MCF 10A (cell line): ENCODE measurements at regions of chr1 and their contacts with region 1.

Region 1: GRCh38 chr1:204806943-204807687 is 63.5 kb upstream of the NFASC start:
- DNase-seq: peak; percentile 94
- H3K4me3 Mint-ChIP-seq: peak overlapping the region; percentile 69
- H3K27ac Mint-ChIP-seq: no peak overlapping the region
- H3K4me1 Mint-ChIP-seq: no peaks in the 10 kb centered on the region
- H3K27me3 Mint-ChIP-seq: peaks cover 25% of the 10 kb centered on the region
- CTCF ChIP-seq: peak; percentile 99

Region 2: GRCh38 chr1:204530932-204531331 is 276.2 kb before region 1 on chr1:
- CTCF ChIA-PET with region 1: interaction called, 40 read pairs
- POLR2A ChIA-PET with region 1: no interaction called
- intact Hi-C with region 1: no loop called
- DNase-seq: no peak
- H3K4me3 Mint-ChIP-seq: no peak overlapping the region
- H3K27ac Mint-ChIP-seq: no peak overlapping the region
- H3K4me1 Mint-ChIP-seq: no peaks in the 10 kb centered on the region
- H3K27me3 Mint-ChIP-seq: no peaks in the 10 kb centered on the region
- CTCF ChIP-seq: no peak

Region 3: GRCh38 chr1:204640578-204640977 is 166.5 kb before region 1 on chr1:
- CTCF ChIA-PET with region 1: interaction called, 33 read pairs
- POLR2A ChIA-PET with region 1: no interaction called
- intact Hi-C with region 1: no loop called
- DNase-seq: no peak
- H3K4me3 Mint-ChIP-seq: no peak overlapping the region
- H3K27ac Mint-ChIP-seq: no peak overlapping the region
- H3K4me1 Mint-ChIP-seq: no peaks in the 10 kb centered on the region
- H3K27me3 Mint-ChIP-seq: peaks cover 51% of the 10 kb centered on the region
- CTCF ChIP-seq: no peak

Region 4: DNA sequence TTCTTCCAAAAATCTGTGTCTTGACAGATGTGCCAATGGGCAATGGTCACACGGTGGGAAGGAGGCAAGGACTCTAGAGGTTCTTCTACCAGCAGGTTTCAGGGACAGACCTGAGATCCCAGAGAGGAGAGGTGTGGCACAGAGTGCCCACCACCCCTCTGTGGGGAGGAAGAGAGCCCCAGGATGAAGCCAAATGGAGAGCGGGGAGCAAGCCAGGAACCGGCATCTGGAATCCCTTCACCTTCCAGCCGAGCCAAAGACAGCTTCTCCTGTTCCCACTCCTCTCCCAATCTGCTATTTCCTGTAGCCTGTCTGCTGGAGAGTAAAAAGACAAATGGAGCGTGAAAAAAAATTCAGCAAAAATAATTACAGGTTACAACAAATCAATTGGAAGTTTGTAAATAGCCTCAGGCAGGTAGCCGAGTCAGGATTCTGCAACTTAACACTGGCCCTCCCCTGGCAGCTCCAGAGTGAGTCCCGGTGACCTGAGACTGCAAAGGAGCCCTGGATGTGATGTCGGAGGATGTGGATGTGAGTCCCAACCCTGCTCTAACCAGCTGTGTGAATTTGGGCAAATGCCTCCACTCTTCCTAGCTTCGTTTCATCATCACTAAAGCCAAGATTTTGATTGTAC is 76.2 kb before region 1 on chr1:
- CTCF ChIA-PET with region 1: interaction called, 20 read pairs
- POLR2A ChIA-PET with region 1: interaction called, 3 read pairs
- intact Hi-C with region 1: no loop called
- DNase-seq: peak; percentile 47
- H3K4me3 Mint-ChIP-seq: no peak overlapping the region
- H3K27ac Mint-ChIP-seq: no peak overlapping the region
- H3K4me1 Mint-ChIP-seq: peaks cover 17% of the 10 kb centered on the region
- H3K27me3 Mint-ChIP-seq: peaks cover 40% of the 10 kb centered on the region
- CTCF ChIP-seq: no peak

Region 5: GRCh38 chr1:204828338-204828850 is 21.3 kb after region 1 on chr1:
- CTCF ChIA-PET with region 1: interaction called, 255 read pairs
- POLR2A ChIA-PET with region 1: interaction called, 4 read pairs
- intact Hi-C with region 1: no loop called
- DNase-seq: no peak
- H3K4me3 Mint-ChIP-seq: no peak overlapping the region
- H3K27ac Mint-ChIP-seq: no peak overlapping the region
- H3K4me1 Mint-ChIP-seq: no peaks in the 10 kb centered on the region
- H3K27me3 Mint-ChIP-seq: peaks cover 79% of the 10 kb centered on the region
- CTCF ChIP-seq: no peak

Region 6: GRCh38 chr1:204961765-204962419 is 154.8 kb after region 1 on chr1:
- CTCF ChIA-PET with region 1: interaction called, 16 read pairs
- POLR2A ChIA-PET with region 1: no interaction called
- intact Hi-C with region 1: no loop called
- DNase-seq: no peak
- H3K4me3 Mint-ChIP-seq: no peak overlapping the region
- H3K27ac Mint-ChIP-seq: no peak overlapping the region
- H3K4me1 Mint-ChIP-seq: no peaks in the 10 kb centered on the region
- H3K27me3 Mint-ChIP-seq: peaks cover 91% of the 10 kb centered on the region
- CTCF ChIP-seq: no peak